Activated B cell treated with CpG ODN at 0.5 μM for 24 hours (primary cell): ENCODE measurements at regions of chr14 and their contacts with region 1.

Region 1: GRCh38 chr14:20413045-20413799 is at the start of gene TEP1:
- DNase-seq: peak; percentile 73
- ATAC-seq: peak; percentile 79
- H3K4me3 Mint-ChIP-seq: peak within 1 kb of the TSS; percentile 99
- H3K27ac Mint-ChIP-seq: peak within 1 kb of the TSS; percentile 99
- H3K4me1 Mint-ChIP-seq: peaks cover 49% of the 10 kb centered on the region
- H3K27me3 Mint-ChIP-seq: no peaks in the 10 kb centered on the region
- CTCF ChIP-seq: no peak
- total RNA-seq, gene TEP1: 99.0 and 120 TPM in 2 replicates

Region 2: GRCh38 chr14:20343092-20343861 is 69.9 kb before region 1 on chr14 and contains the start of gene PARP2:
- CTCF ChIA-PET with region 1: interaction called, 4 read pairs
- POLR2A ChIA-PET with region 1: interaction called, 43 read pairs
- intact Hi-C with region 1: loop called (anchors 1 kb)
- DNase-seq: peak; percentile 87
- ATAC-seq: peak; percentile 87
- H3K4me3 Mint-ChIP-seq: peak within 1 kb of the TSS; percentile 98
- H3K27ac Mint-ChIP-seq: peak within 1 kb of the TSS; percentile 97
- H3K4me1 Mint-ChIP-seq: peaks cover 12% of the 10 kb centered on the region
- H3K27me3 Mint-ChIP-seq: no peaks in the 10 kb centered on the region
- CTCF ChIP-seq: no peak
- total RNA-seq, gene PARP2: 17.1 and 19.5 TPM in 2 replicates

Region 3: DNA sequence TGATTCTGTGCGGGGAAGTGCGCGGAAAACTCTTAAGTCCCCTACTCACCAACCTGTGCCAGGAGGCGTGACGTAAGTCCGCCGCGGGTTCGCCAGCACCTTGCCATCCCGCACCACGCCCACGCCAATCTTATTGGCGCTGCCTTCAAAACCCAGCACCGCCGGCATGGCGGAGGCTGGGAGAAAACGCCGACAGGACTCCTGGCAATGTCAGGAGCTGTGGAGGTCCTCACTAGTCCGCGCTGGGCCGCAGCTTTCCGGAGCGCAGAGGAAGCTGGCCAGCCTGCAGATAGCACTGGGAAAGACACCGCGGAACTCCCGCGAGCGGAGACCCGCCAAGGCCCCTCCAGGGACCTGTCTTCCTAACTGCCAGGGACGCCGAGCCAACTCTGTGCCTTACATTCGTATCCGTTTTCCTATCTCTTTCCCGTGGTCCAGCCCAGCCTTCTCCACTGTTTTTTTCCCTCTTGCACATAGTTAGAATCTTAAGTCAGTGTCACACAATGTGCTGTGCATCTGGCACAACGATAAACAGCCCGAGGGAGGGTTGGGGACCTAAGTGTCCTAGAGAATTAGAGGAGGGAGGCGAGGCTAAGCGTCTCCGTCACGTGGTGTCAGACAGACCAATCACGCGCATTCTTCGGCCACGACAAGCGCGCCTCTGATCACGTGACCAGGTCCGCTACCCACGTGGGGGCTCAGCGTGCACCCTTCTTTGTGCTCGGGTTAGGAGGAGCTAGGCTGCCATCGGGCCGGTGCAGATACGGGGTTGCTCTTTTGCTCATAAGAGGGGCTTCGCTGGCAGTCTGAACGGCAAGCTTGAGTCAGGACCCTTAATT is 41.5 kb after region 1 on chr14 and contains the starts of genes APEX1 and OSGEP:
- CTCF ChIA-PET with region 1: interaction called, 29 read pairs
- POLR2A ChIA-PET with region 1: interaction called, 68 read pairs
- intact Hi-C with region 1: loop called (anchors 1 kb)
- DNase-seq: peak; percentile 88
- ATAC-seq: peak; percentile 88
- H3K4me3 Mint-ChIP-seq: peak within 1 kb of the TSS; percentile 56
- H3K27ac Mint-ChIP-seq: no peak within 1 kb of the TSS
- H3K4me1 Mint-ChIP-seq: peaks cover 35% of the 10 kb centered on the region
- H3K27me3 Mint-ChIP-seq: no peaks in the 10 kb centered on the region
- CTCF ChIP-seq: no peak
- total RNA-seq, gene APEX1: 215 and 231 TPM in 2 replicates
- total RNA-seq, gene OSGEP: 98.3 and 112 TPM in 2 replicates

Region 4: GRCh38 chr14:20477211-20477876 is 64.1 kb after region 1 on chr14:
- CTCF ChIA-PET with region 1: interaction called, 13 read pairs
- POLR2A ChIA-PET with region 1: interaction called, 5 read pairs
- intact Hi-C with region 1: no loop called
- DNase-seq: no peak
- ATAC-seq: peak; percentile 80
- H3K4me3 Mint-ChIP-seq: peak overlapping the region; percentile 21
- H3K27ac Mint-ChIP-seq: peak overlapping the region; percentile 89
- H3K4me1 Mint-ChIP-seq: peaks cover 41% of the 10 kb centered on the region
- H3K27me3 Mint-ChIP-seq: no peaks in the 10 kb centered on the region
- CTCF ChIP-seq: no peak

Region 5: GRCh38 chr14:20539906-20540305 is 126.7 kb after region 1 on chr14:
- CTCF ChIA-PET with region 1: no interaction called
- POLR2A ChIA-PET with region 1: interaction called, 10 read pairs
- intact Hi-C with region 1: no loop called
- DNase-seq: no peak
- ATAC-seq: no peak
- H3K4me3 Mint-ChIP-seq: no peak overlapping the region
- H3K27ac Mint-ChIP-seq: no peak overlapping the region
- H3K4me1 Mint-ChIP-seq: no peaks in the 10 kb centered on the region
- H3K27me3 Mint-ChIP-seq: peaks cover 10% of the 10 kb centered on the region
- CTCF ChIP-seq: no peak

Region 6: DNA sequence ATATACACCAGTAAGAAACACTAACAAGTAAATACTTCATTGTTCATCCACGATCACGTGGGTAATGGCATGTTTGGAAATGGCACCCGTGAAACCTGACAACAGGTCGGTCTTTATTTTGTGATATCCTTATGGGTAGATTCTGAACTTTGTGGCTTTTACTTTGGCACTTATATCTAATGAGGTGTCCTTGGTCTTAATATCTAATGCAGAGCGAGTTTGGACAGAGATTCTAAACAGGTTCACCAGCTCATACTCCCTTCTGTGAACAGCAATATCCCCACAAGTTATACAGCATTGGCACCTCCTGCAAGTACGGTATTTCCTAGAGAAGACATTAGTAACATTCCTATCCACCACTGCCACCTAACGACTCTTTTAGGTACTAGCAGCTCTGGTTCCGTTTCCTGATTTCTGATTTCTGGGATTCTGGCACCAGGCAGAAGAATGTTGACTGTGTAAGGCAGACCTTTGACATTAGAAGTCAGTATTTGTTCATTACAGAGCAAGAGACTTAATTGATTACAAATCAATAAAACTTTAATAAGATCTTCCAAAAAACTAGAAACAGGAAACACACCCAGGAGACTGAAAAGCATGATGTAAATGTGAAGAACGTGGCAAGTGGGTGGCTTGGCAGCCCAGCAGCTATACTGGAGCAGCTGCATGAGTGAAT is 277.8 kb after region 1 on chr14:
- CTCF ChIA-PET with region 1: interaction called, 12 read pairs
- POLR2A ChIA-PET with region 1: no interaction called
- intact Hi-C with region 1: no loop called
- DNase-seq: no peak
- ATAC-seq: peak; percentile 96
- H3K4me3 Mint-ChIP-seq: no peak overlapping the region
- H3K27ac Mint-ChIP-seq: no peak overlapping the region
- H3K4me1 Mint-ChIP-seq: peaks cover 5% of the 10 kb centered on the region
- H3K27me3 Mint-ChIP-seq: no peaks in the 10 kb centered on the region
- CTCF ChIP-seq: peak; percentile 89